GM12878 (cell line): ENCODE measurements at regions of chr14 and their contacts with region 1.

Region 1: GRCh38 chr14:57390028-57390805 is at the start of gene NAA30:
- DNase-seq: peak; percentile 81
- ATAC-seq: peak; percentile 86
- H3K4me3 ChIP-seq: peak within 1 kb of the TSS; percentile 90
- H3K27ac ChIP-seq: peak within 1 kb of the TSS; percentile 83
- H3K4me1 ChIP-seq: peaks cover 9% of the 10 kb centered on the region
- H3K27me3 ChIP-seq: no peaks in the 10 kb centered on the region
- CTCF ChIP-seq: no peak
- EP300 ChIP-seq: no peak
- POLR2A ChIP-seq: peak; percentile 87
- RAD21 ChIP-seq: no peak
- polyA plus RNA-seq, gene NAA30: 4.5 to 5.3 TPM

Region 2: DNA sequence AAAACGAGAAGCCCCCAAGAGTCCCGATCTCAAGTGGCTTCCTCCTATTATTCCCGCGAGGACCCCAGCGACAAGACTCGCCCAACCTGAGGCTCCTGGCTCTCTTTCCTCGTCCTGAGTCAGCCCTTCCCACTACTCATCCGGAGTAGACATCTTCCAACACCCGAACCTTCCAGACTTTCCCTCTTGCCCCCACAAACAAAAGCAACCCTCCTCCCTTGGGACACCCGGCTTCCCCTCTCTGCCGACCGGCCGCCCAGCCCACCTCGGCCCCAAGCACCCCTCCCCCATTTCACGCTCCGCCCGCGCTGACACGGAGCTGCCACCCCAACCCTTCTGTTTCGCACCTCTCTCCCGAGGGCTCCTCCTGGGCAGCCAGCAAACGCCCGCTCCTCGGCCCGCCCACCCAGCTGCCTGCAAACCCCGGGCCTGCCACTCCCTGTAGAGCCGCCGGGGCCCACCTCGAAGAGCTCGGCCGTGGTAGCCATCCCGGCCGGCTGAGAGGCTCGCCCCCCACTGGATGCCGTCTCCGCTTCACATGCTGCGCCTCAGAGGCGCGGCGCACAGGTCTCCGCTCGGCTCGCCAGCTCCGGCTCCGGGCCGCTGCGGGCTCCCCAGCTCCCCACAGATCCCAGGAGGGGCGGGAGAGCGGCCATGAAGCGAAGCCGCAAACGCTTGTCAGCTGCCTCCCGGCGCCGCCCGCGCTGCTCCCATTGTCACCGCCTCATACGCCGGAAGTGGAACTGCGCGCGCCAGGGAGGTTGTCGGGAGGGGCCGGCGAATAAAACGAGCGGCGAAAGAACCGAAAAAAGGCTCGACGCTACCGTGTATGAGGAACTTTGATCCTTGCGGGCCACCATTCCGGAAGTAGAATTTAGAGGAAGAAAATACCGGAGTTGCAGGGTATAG is 121.8 kb before region 1 on chr14 and contains the starts of genes AP5M1 and EXOC5:
- CTCF ChIA-PET with region 1: interaction called, 3 read pairs
- POLR2A ChIA-PET with region 1: no interaction called
- RAD21 ChIA-PET with region 1: interaction called, 3 read pairs
- SMC1A ChIA-PET with region 1: no interaction called
- in situ Hi-C with region 1: no loop called
- intact Hi-C with region 1: loop called (anchors 5 kb)
- DNase-seq: peak; percentile 83
- ATAC-seq: peak; percentile 89
- H3K4me3 ChIP-seq: peak within 1 kb of the TSS; percentile 96
- H3K27ac ChIP-seq: peak within 1 kb of the TSS; percentile 84
- H3K4me1 ChIP-seq: 0 out of 2 replicates have a peak, but pooled peaks cover 4% of the 10 kb centered on the region
- H3K27me3 ChIP-seq: no peaks in the 10 kb centered on the region
- CTCF ChIP-seq: 0 out of 6 replicates have a peak, but pooled peaks of 1 of the 3 experiments have one; percentile 1
- EP300 ChIP-seq: no peak
- POLR2A ChIP-seq: peak; percentile 85
- RAD21 ChIP-seq: no peak
- polyA plus RNA-seq, gene AP5M1: 30.1 to 58.7 TPM
- polyA plus RNA-seq, gene EXOC5: 10.3 to 11.2 TPM

Region 3: GRCh38 chr14:57403521-57403864 is 13.3 kb after region 1 on chr14:
- CTCF ChIA-PET with region 1: interaction called, 3 read pairs
- POLR2A ChIA-PET with region 1: interaction called, 12 read pairs
- RAD21 ChIA-PET with region 1: no interaction called
- SMC1A ChIA-PET with region 1: interaction called, 4 read pairs
- in situ Hi-C with region 1: no loop called
- intact Hi-C with region 1: no loop called
- DNase-seq: no peak
- ATAC-seq: no peak
- H3K4me3 ChIP-seq: no peak overlapping the region
- H3K27ac ChIP-seq: no peak overlapping the region
- H3K4me1 ChIP-seq: no peaks in the 10 kb centered on the region
- H3K27me3 ChIP-seq: no peaks in the 10 kb centered on the region
- CTCF ChIP-seq: no peak
- EP300 ChIP-seq: no peak
- POLR2A ChIP-seq: no peak
- RAD21 ChIP-seq: no peak

Region 4: DNA sequence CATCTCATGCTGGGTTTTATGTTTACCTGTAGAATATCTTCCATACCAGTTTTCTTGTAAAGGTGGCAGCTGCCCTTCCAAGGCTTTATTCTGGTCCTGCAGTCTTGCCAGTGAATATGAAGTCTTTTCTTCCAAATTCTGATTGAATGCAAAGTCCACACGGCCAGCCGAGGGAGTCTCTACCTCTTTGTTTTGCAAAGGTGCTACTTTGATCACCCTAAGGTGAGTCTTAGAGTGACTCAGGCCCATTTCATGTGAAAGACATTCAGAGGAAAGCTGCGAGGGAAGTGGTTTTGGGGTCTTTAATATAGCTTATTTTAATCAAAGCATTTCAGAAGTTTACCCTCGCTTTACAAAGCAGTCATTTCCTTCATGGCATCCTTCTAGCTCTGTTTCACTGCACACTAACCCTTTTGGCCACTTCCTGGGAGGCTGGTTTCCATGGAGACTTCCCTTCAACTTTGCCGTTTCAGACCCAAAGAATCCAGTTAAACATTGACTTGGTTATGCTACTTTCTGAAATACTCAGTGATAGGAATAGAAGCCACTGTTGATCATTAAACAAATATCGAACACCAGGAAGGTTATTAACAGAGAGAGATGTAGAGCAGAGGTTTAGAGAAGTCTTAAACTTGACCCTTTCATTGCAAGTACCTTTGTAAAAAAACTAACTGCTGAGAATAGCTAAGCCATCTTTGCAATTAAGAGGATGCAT is 103.4 kb after region 1 on chr14 and contains the start of gene CCDC198:
- CTCF ChIA-PET with region 1: no interaction called
- POLR2A ChIA-PET with region 1: no interaction called
- RAD21 ChIA-PET with region 1: no interaction called
- SMC1A ChIA-PET with region 1: no interaction called
- in situ Hi-C with region 1: no loop called
- intact Hi-C with region 1: loop called (anchors 5 kb)
- DNase-seq: peak; percentile 65
- ATAC-seq: peak; percentile 76
- H3K4me3 ChIP-seq: no peak within 1 kb of the TSS
- H3K27ac ChIP-seq: no peak within 1 kb of the TSS
- H3K4me1 ChIP-seq: no peaks in the 10 kb centered on the region
- H3K27me3 ChIP-seq: no peaks in the 10 kb centered on the region
- CTCF ChIP-seq: no peak
- EP300 ChIP-seq: no peak
- POLR2A ChIP-seq: no peak
- RAD21 ChIP-seq: no peak
- polyA plus RNA-seq, gene CCDC198: 1.3 to 1.9 TPM